ENCODE measurements at regions of chr6 and their contacts with region 1.

Region 1: DNA sequence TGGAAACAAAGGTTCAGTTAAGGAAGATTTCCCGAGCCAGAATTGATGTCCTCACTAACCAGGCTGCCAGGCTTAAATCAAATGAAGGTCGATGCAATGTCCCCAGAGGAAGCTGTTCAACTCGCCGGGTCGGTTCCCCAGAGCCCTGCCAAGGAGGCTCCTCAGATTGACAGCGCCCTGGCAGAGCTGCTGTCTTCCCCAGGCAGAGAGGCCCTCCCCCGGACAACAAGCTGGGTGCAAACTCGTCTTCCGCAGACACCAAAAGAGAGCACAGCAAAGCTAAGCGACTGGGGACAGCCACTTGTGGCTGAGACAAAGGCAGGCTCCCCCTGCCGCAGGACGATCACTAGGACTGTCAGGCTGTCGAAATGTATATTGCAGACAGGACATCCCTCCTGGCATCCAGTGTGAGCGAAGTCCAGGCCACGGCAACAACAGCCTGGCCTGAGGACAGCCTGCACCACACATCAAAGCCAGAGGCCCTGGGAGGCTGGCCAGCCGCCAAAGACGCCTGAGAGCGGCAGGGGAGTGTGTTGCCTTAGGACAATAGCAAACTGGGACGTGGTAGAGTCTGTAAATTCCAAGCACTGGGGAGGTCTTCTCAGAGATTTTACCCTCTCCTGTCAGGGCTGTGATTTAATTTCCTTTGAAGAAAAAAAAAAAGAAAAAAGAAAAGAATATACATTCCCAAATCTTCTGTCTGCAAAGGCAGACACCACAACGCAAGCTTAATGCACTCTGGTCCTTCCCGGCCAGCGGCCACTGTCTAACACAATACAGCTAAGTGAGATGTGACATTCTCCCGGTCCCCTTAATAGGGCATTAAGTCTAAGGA is 99.1 kb downstream of the HIVEP2 start:
- DNase-seq: peak; percentile 48
- H3K4me3 Mint-ChIP-seq: peak overlapping the region; percentile 81
- H3K27ac Mint-ChIP-seq: peak overlapping the region; percentile 91
- H3K4me1 Mint-ChIP-seq: peaks cover 91% of the 10 kb centered on the region
- H3K27me3 Mint-ChIP-seq: no peaks in the 10 kb centered on the region

Region 2: GRCh38 chr6:142146828-142147662 is 698.8 kb before region 1 on chr6 and contains the starts of genes NMBR and VTA1:
- intact Hi-C with region 1: loop called (anchors 10 kb)
- DNase-seq: peak; percentile 95
- H3K4me3 Mint-ChIP-seq: peak within 1 kb of the TSS; percentile 90
- H3K27ac Mint-ChIP-seq: peak within 1 kb of the TSS; percentile 79
- H3K4me1 Mint-ChIP-seq: peaks cover 37% of the 10 kb centered on the region
- H3K27me3 Mint-ChIP-seq: no peaks in the 10 kb centered on the region
- total RNA-seq, gene NMBR: not detected in 2 replicates
- total RNA-seq, gene VTA1: 52.4 and 59.6 TPM in 2 replicates

Region 3: GRCh38 chr6:142773859-142774648 is 71.8 kb before region 1 on chr6:
- intact Hi-C with region 1: loop called (anchors 1 kb)
- DNase-seq: no peak
- H3K4me3 Mint-ChIP-seq: no peak overlapping the region
- H3K27ac Mint-ChIP-seq: peak overlapping the region; percentile 80
- H3K4me1 Mint-ChIP-seq: peaks cover 44% of the 10 kb centered on the region
- H3K27me3 Mint-ChIP-seq: no peaks in the 10 kb centered on the region

Region 4: DNA sequence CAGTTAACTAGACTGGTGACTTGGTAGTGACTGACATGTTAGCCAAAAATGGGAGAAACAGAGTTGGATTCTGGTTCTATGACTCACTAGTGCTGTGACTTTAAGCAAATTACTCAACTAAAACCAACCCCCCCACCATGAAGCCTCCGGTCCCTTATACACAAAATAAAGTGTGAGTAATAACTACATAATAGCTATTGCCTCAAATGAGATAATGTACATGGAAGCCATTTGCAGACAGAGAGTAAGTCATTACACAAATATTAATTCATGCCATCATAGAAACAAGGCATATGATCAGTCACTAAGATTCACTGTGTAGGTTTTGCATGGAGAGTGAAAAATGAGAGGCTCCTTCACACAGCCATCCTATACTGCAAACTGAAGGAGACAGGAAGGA is 12.8 kb before region 1 on chr6:
- intact Hi-C with region 1: loop called (anchors 1 kb)
- DNase-seq: no peak
- H3K4me3 Mint-ChIP-seq: no peak overlapping the region
- H3K27ac Mint-ChIP-seq: peak overlapping the region; percentile 62
- H3K4me1 Mint-ChIP-seq: peaks cover 44% of the 10 kb centered on the region
- H3K27me3 Mint-ChIP-seq: no peaks in the 10 kb centered on the region

Region 5: DNA sequence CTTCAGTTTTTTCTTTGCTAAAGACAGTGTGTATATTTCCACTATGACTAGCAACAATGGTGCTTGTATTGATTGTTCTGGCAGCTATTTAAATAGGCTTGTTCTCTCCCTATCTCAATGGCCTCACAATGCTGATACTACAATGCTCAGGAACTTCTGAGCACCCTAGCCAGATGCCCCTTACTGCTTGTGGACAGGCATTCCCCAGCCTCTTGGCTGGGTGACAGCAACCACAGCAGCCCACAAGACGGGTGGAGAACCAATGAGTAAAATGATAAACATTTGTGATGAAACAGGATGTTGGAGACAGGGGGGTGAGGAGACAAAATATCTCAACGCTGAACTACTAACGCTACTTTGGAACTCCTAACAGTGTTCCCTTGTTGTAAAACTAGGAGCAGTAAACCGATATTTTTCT is 56.8 kb after region 1 on chr6:
- intact Hi-C with region 1: loop called (anchors 1 kb)
- DNase-seq: peak; percentile 76
- H3K4me3 Mint-ChIP-seq: peak overlapping the region; percentile 49
- H3K27ac Mint-ChIP-seq: peak overlapping the region; percentile 91
- H3K4me1 Mint-ChIP-seq: peaks cover 63% of the 10 kb centered on the region
- H3K27me3 Mint-ChIP-seq: no peaks in the 10 kb centered on the region

Region 6: GRCh38 chr6:143136647-143137046 is 290.8 kb after region 1 on chr6:
- intact Hi-C with region 1: loop called (anchors 1 kb)
- DNase-seq: no peak
- H3K4me3 Mint-ChIP-seq: no peak overlapping the region
- H3K27ac Mint-ChIP-seq: peak overlapping the region; percentile 70
- H3K4me1 Mint-ChIP-seq: peaks cover 30% of the 10 kb centered on the region
- H3K27me3 Mint-ChIP-seq: no peaks in the 10 kb centered on the region

Region 7: GRCh38 chr6:143510991-143511891 is 665.4 kb after region 1 on chr6 and contains the start of gene FUCA2:
- intact Hi-C with region 1: no loop called
- DNase-seq: peak; percentile 64
- H3K4me3 Mint-ChIP-seq: peak within 1 kb of the TSS; percentile 95
- H3K27ac Mint-ChIP-seq: peak within 1 kb of the TSS; percentile 96
- H3K4me1 Mint-ChIP-seq: peaks cover 39% of the 10 kb centered on the region
- H3K27me3 Mint-ChIP-seq: no peaks in the 10 kb centered on the region
- total RNA-seq, gene FUCA2: 15.7 and 16.3 TPM in 2 replicates